HepG2 (cell line): ENCODE measurements at regions of chr4 and their contacts with region 1.

Region 1: GRCh38 chr4:32261196-32261595 is 1541.0 kb downstream of the PCDH7 start:
- DNase-seq: no peak
- ATAC-seq: no peak
- H3K4me3 ChIP-seq: no peak overlapping the region
- H3K27ac ChIP-seq: no peak overlapping the region
- H3K4me1 ChIP-seq: no peaks in the 10 kb centered on the region
- H3K27me3 ChIP-seq: no peaks in the 10 kb centered on the region
- CTCF ChIP-seq: no peak
- EP300 ChIP-seq: no peak
- POLR2A ChIP-seq: no peak
- RAD21 ChIP-seq: no peak

Region 2: DNA sequence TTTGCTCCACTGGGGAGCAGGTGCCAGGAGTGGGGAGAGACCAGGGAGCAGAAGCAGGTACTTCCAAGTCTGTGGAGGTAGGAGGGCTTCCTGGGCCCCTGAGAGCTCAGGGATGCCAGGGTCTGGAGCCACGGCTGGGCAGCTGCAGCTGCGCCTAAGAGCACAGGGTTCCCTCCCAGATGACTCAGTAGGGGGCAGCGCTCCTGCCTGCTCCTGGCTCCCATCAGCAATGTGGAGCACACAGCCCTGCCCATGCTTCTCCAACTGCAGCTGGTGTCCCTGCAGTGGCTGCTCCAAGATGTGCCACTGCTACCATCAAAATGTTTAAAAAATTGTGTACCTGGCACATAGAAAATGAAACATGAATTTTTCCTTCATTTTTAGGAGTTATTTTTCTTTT is 512.8 kb before region 1 on chr4:
- CTCF ChIA-PET with region 1: no interaction called
- POLR2A ChIA-PET with region 1: no interaction called
- in situ Hi-C with region 1: no loop called
- intact Hi-C with region 1: no loop called
- DNase-seq: no peak
- ATAC-seq: no peak
- H3K4me3 ChIP-seq: no peak overlapping the region
- H3K27ac ChIP-seq: no peak overlapping the region
- H3K4me1 ChIP-seq: no peaks in the 10 kb centered on the region
- H3K27me3 ChIP-seq: no peaks in the 10 kb centered on the region
- CTCF ChIP-seq: no peak
- EP300 ChIP-seq: no peak
- POLR2A ChIP-seq: no peak
- RAD21 ChIP-seq: no peak

Region 3: DNA sequence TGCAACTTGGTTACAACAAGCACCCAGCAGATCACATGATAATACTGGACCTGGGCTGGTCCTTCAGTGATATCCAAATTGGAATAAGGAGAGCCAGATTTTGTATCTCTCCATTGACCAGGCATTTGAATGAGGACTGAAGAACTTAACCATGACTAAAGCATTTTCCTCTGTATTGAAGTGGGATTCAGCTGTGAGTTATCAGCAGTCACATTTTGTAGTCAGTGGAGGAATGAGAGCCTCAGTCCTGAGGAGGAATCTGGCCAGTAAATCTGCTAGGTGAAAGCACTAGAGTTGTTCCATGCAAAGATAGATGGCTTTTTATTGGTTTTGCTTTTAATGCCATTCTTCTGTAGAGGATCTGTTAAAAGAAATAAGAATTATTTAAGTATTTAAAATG is 35.0 kb before region 1 on chr4:
- CTCF ChIA-PET with region 1: no interaction called
- POLR2A ChIA-PET with region 1: no interaction called
- in situ Hi-C with region 1: no loop called
- intact Hi-C with region 1: no loop called
- DNase-seq: no peak
- ATAC-seq: no peak
- H3K4me3 ChIP-seq: no peak overlapping the region
- H3K27ac ChIP-seq: no peak overlapping the region
- H3K4me1 ChIP-seq: no peaks in the 10 kb centered on the region
- H3K27me3 ChIP-seq: no peaks in the 10 kb centered on the region
- CTCF ChIP-seq: no peak
- EP300 ChIP-seq: no peak
- POLR2A ChIP-seq: no peak
- RAD21 ChIP-seq: no peak

Region 4: DNA sequence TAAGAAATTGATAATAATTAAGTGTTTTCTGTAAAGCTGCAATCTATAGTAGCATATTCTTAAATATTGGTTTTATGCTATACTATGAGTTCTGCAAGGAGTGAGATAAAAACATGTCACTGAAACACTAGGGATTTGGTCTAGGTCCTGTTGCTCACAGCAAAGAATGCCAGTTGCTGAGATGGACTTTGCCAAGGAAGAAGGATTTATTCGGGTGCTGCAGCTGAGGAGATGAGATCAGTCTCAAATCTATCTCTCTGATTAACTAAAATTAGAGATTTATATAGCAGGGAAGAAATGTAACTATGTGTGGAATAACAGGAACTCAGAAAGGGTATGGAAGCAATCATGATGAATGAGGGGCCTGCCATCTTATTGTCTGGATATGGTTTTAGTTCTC is 28.9 kb after region 1 on chr4:
- CTCF ChIA-PET with region 1: no interaction called
- POLR2A ChIA-PET with region 1: no interaction called
- in situ Hi-C with region 1: no loop called
- intact Hi-C with region 1: loop called (anchors 1 kb)
- DNase-seq: no peak
- ATAC-seq: no peak
- H3K4me3 ChIP-seq: no peak overlapping the region
- H3K27ac ChIP-seq: no peak overlapping the region
- H3K4me1 ChIP-seq: no peaks in the 10 kb centered on the region
- H3K27me3 ChIP-seq: no peaks in the 10 kb centered on the region
- CTCF ChIP-seq: no peak
- EP300 ChIP-seq: no peak
- POLR2A ChIP-seq: no peak
- RAD21 ChIP-seq: no peak